ENCODE measurements at regions of chr11 and their contacts with region 1.

Region 1: GRCh38 chr11:101860696-101861427 is 53.9 kb upstream of the CEP126 start:
- DNase-seq: peak in 1 of 2 donors; percentile 64
- H3K4me3 ChIP-seq: no peak overlapping the region
- H3K27ac ChIP-seq: no peak overlapping the region
- H3K4me1 ChIP-seq: no peaks in the 10 kb centered on the region
- H3K27me3 ChIP-seq: no peaks in the 10 kb centered on the region
- CTCF ChIP-seq: peak; percentile 66 to 78 (median 68)

Region 2: GRCh38 chr11:101974255-101974654 is 113.4 kb after region 1 on chr11:
- intact Hi-C with region 1: loop called (anchors 10 kb)
- DNase-seq: no peak
- H3K4me3 ChIP-seq: no peak overlapping the region
- H3K27ac ChIP-seq: no peak overlapping the region
- H3K4me1 ChIP-seq: no peaks in the 10 kb centered on the region
- H3K27me3 ChIP-seq: no peaks in the 10 kb centered on the region
- CTCF ChIP-seq: peak in 1 of 3 experiments; percentile 29

Region 3: GRCh38 chr11:102007567-102008437 is 146.9 kb after region 1 on chr11:
- intact Hi-C with region 1: loop called (anchors 1 kb)
- DNase-seq: no peak
- H3K4me3 ChIP-seq: no peak overlapping the region
- H3K27ac ChIP-seq: no peak overlapping the region
- H3K4me1 ChIP-seq: peaks cover 0 to 9% of the 10 kb centered on the region in 2 donors
- H3K27me3 ChIP-seq: no peaks in the 10 kb centered on the region
- CTCF ChIP-seq: peak in 2 of 3 experiments; percentile 43 to 56